Naive thymus-derived CD8-positive, alpha-beta T cell (primary cell): ENCODE measurements at regions of chr19 and their contacts with region 1.

Region 1: GRCh38 chr19:40609561-40610395 is 8.6 kb downstream of the LTBP4 start:
- DNase-seq: peak; percentile 68 to 89 (median 79)
- ATAC-seq: peak; percentile 18 to 36
- H3K4me3 Mint-ChIP-seq: peak overlapping the region; percentile 77 to 89 (median 84)
- H3K27ac Mint-ChIP-seq: peak overlapping the region; percentile 79 to 99 (median 93)
- H3K4me1 Mint-ChIP-seq: peaks cover 42 to 90% (median 72%) of the 10 kb centered on the region in 4 donors
- H3K27me3 Mint-ChIP-seq: no peaks in the 10 kb centered on the region

Region 2: DNA sequence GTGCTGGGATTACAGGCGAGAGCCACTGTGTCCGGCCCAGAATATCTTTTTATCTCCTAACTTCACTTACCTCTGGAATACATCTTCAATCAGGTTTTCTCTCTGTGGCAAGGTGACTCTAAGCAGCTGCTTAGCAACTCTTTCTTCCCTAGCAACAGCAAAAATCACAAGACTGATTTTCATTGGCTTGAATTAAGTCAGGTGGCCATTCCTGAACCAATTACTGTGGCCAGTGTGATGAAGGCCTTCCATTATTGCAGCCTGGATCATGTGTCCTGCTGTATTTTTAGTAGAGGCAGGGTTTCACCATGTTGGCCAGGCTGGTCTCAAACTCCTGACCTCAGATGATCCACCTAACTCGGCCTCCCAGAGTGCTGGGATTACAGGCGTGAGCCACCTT is 17.6 kb before region 1 on chr19:
- POLR2A ChIA-PET with region 1: no interaction called
- DNase-seq: no peak
- ATAC-seq: peak; percentile 39 to 80
- H3K4me3 Mint-ChIP-seq: no peak overlapping the region
- H3K27ac Mint-ChIP-seq: peak overlapping the region in 2 of 10 donors; percentile 44 to 70
- H3K4me1 Mint-ChIP-seq: peaks cover 8 to 19% (median 12%) of the 10 kb centered on the region in 4 donors
- H3K27me3 Mint-ChIP-seq: peaks cover 0 to 4% (median 2%) of the 10 kb centered on the region in 5 donors

Region 3: GRCh38 chr19:40640744-40641143 is 31.0 kb after region 1 on chr19:
- POLR2A ChIA-PET with region 1: interaction called, 11 read pairs
- DNase-seq: peak in 1 of 10 donors; percentile 8
- ATAC-seq: no peak
- H3K4me3 Mint-ChIP-seq: no peak overlapping the region
- H3K27ac Mint-ChIP-seq: peak overlapping the region in 2 of 10 donors; percentile 37 to 48
- H3K4me1 Mint-ChIP-seq: peaks cover 0 to 8% (median 0%) of the 10 kb centered on the region in 4 donors
- H3K27me3 Mint-ChIP-seq: peaks cover 0 to 6% (median 0%) of the 10 kb centered on the region in 5 donors

Region 4: DNA sequence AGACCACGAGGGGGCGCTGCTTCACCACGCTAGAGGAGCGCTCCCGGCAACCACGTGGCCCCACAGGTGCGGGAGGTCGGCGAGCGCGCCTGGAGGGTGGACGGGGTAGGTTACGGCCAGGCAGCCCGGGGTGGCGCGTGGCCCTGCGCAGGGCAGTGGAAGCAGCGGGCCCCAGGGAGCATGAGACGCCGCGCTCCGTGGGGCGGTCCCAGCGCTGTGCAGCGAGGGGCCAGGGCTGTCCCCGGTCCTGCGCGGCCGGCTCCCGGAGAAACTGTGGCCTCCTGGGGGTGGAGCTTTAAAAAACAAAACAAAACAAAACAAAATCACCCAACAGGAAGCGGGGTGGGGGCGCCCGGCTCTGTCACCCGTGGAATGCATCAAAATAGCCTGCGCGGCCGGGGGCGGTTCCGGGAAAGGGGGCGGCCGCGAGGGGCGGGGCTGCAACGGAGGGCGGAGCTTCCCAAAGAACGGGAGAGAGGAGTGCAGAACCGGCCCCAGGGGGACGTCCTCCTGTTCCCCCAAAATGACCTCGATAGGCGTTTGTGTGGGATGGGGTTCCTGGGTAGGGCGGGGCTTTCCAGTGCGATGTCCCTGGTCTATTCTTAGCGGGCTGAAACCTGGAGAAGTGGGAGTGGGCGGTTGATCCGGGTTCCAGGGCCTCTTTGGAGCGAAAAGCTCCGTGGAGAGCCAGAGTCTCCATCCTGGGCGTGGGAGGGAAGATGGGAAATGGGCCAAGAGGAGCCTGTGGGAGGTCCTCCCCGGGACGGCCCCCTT is 53.3 kb after region 1 on chr19:
- POLR2A ChIA-PET with region 1: no interaction called
- DNase-seq: peak; percentile 81 to 98 (median 92)
- ATAC-seq: peak; percentile 91 to 92
- H3K4me3 Mint-ChIP-seq: peak overlapping the region; percentile 76 to 91 (median 84)
- H3K27ac Mint-ChIP-seq: peak overlapping the region; percentile 63 to 93 (median 90)
- H3K4me1 Mint-ChIP-seq: peaks cover 6 to 15% (median 8%) of the 10 kb centered on the region in 4 donors
- H3K27me3 Mint-ChIP-seq: no peaks in the 10 kb centered on the region

Region 5: GRCh38 chr19:40705362-40705651 is 95.5 kb after region 1 on chr19:
- POLR2A ChIA-PET with region 1: no interaction called
- DNase-seq: no peak
- ATAC-seq: no peak
- H3K4me3 Mint-ChIP-seq: no peak overlapping the region
- H3K27ac Mint-ChIP-seq: no peak overlapping the region
- H3K4me1 Mint-ChIP-seq: peaks cover 1 to 4% (median 3%) of the 10 kb centered on the region in 4 donors
- H3K27me3 Mint-ChIP-seq: no peaks in the 10 kb centered on the region